HCT116 (cell line): ENCODE measurements at regions of chr2 and their contacts with region 1.

Region 1: GRCh38 chr2:86649119-86649947 is 25.7 kb upstream of the RNF103 start:
- DNase-seq: no peak
- ATAC-seq: no peak
- H3K4me3 ChIP-seq: no peak overlapping the region
- H3K27ac ChIP-seq: no peak overlapping the region
- H3K4me1 ChIP-seq: no peaks in the 10 kb centered on the region
- H3K27me3 ChIP-seq: no peaks in the 10 kb centered on the region
- CTCF ChIP-seq: no peak
- POLR2A ChIP-seq: no peak
- RAD21 ChIP-seq: no peak

Region 2: GRCh38 chr2:86675511-86676015 is 26.2 kb after region 1 on chr2:
- CTCF ChIA-PET with region 1: interaction called, 3 read pairs
- POLR2A ChIA-PET with region 1: no interaction called
- RAD21 ChIA-PET with region 1: no interaction called
- intact Hi-C with region 1: loop called (anchors 5 kb)
- DNase-seq: peak; percentile 38
- ATAC-seq: peak; percentile 97
- H3K4me3 ChIP-seq: no peak overlapping the region
- H3K27ac ChIP-seq: no peak overlapping the region
- H3K4me1 ChIP-seq: no peaks in the 10 kb centered on the region
- H3K27me3 ChIP-seq: no peaks in the 10 kb centered on the region
- CTCF ChIP-seq: peak; percentile 26 to 64 (median 53); a peak in 5 of 6 replicates
- POLR2A ChIP-seq: no peak
- RAD21 ChIP-seq: peak; percentile 62